A673 (cell line): ENCODE measurements at regions of chr10 and their contacts with region 1.

Region 1: GRCh38 chr10:13877154-13877909 is 290.6 kb downstream of the PRPF18 start:
- DNase-seq: no peak
- H3K4me3 ChIP-seq: no peak overlapping the region
- H3K27ac ChIP-seq: no peak overlapping the region
- H3K4me1 ChIP-seq: no peaks in the 10 kb centered on the region
- H3K27me3 ChIP-seq: peaks cover 10% of the 10 kb centered on the region
- CTCF ChIP-seq: no peak

Region 2: GRCh38 chr10:14397066-14397465 is 519.7 kb after region 1 on chr10:
- CTCF ChIA-PET with region 1: no interaction called
- POLR2A ChIA-PET with region 1: interaction called, 10 read pairs
- intact Hi-C with region 1: no loop called
- DNase-seq: peak; percentile 96
- H3K4me3 ChIP-seq: no peak overlapping the region
- H3K27ac ChIP-seq: peak overlapping the region; percentile 53
- H3K4me1 ChIP-seq: peaks cover 17% of the 10 kb centered on the region
- H3K27me3 ChIP-seq: peaks cover 6% of the 10 kb centered on the region
- CTCF ChIP-seq: no peak